Gastrocnemius medialis (tissue), 4 donors: ENCODE measurements at regions of chr2 and their contacts with region 1.

Region 1: DNA sequence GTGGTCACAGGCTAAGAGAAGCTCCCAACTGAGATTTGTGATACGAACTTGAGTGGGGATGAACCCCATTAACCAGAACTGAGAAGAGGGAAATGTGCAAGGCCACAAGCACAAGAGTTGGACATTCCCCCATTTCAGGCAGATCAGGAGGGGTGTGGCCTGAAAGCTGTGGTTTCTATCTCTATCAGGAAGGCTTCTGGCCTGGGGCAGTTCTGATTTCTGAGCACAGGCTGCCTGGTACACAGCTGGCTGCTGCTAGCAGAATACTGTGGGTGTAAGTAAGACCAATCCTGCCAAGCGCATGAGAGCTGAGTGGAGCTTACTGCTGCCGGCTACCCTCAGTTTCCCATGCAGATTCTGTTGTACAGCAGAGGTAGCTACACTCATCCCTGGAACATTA is 484.6 kb downstream of the SATB2 start:
- DNase-seq: no peak
- ATAC-seq: no peak
- H3K4me3 ChIP-seq: no peak overlapping the region
- H3K27ac ChIP-seq: no peak overlapping the region
- H3K4me1 ChIP-seq: no peaks in the 10 kb centered on the region
- H3K27me3 ChIP-seq: no peaks in the 10 kb centered on the region
- CTCF ChIP-seq: no peak
- POLR2A ChIP-seq: no peak

Region 2: GRCh38 chr2:198930170-198930569 is 43.0 kb before region 1 on chr2:
- in situ Hi-C with region 1: no loop called
- intact Hi-C with region 1: loop called (anchors 1 kb)
- DNase-seq: no peak
- ATAC-seq: no peak
- H3K4me3 ChIP-seq: no peak overlapping the region
- H3K27ac ChIP-seq: no peak overlapping the region
- H3K4me1 ChIP-seq: no peaks in the 10 kb centered on the region
- H3K27me3 ChIP-seq: no peaks in the 10 kb centered on the region
- CTCF ChIP-seq: no peak
- POLR2A ChIP-seq: no peak

Region 3: DNA sequence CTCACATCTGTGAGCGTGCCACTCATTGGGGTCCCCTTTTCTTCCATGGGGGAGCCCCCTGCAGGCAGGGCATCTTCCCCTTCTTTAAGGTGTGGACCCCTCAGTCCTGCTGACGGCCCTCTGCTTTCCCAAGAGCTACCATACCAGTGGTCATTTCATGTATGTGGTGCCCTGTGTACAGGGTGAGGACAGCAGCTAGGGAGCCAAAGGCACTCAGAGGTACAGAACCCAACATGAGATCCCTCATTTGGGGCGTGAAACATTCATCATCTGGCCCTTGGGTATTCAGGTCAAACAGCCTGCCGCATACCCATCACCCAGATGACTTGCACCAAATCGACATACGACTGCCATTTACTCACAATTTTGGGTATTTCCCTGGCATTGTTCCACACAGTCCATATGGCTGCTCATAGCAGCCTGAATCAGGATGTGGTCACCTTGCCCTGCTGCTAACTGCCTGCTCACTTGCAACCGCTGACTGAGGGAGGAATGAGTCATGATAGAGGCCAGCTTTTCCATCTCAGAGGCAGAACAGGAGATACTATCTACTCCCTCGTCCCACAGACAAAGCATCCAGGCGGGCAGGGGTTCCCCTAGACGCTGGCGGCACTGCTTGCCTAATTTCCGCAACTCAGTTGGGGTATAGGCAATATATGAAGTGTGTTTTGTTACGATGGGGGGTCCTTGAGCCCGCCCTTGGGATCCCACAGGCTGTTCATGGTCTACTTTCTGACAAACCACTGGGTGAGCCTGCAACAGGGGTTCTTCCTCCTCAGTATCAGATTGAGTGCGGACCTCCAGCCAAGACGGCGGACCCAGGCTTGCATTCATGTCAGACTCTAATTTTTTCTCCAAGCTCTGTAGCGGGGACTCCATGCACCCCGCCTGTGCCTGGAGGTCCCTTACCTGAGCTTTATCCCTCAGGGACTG is 256.0 kb after region 1 on chr2:
- in situ Hi-C with region 1: no loop called
- intact Hi-C with region 1: no loop called
- DNase-seq: no peak
- ATAC-seq: no peak
- H3K4me3 ChIP-seq: no peak overlapping the region
- H3K27ac ChIP-seq: no peak overlapping the region
- H3K4me1 ChIP-seq: no peaks in the 10 kb centered on the region
- H3K27me3 ChIP-seq: no peaks in the 10 kb centered on the region
- CTCF ChIP-seq: no peak
- POLR2A ChIP-seq: no peak